ENCODE measurements at regions of chr10 and their contacts with region 1.

Region 1: GRCh38 chr10:63157845-63158624 is 24.9 kb downstream of the NRBF2 start:
- DNase-seq: peak; percentile 67 to 92 (median 72)
- ATAC-seq: peak; percentile 87
- H3K4me3 ChIP-seq: no peak overlapping the region
- H3K27ac ChIP-seq: no peak overlapping the region
- H3K4me1 ChIP-seq: no peaks in the 10 kb centered on the region
- H3K27me3 ChIP-seq: no peaks in the 10 kb centered on the region
- CTCF ChIP-seq: peak; percentile 79 to 93 (median 83)
- EP300 ChIP-seq: no peak
- POLR2A ChIP-seq: no peak
- RAD21 ChIP-seq: peak; percentile 98 to 99

Region 2: GRCh38 chr10:62554632-62555199 is 603.3 kb before region 1 on chr10:
- CTCF ChIA-PET with region 1: no interaction called
- POLR2A ChIA-PET with region 1: no interaction called
- in situ Hi-C with region 1: no loop called
- intact Hi-C with region 1: loop called (anchors 2 kb)
- DNase-seq: peak; percentile 32 to 38 (median 33)
- ATAC-seq: peak; percentile 82
- H3K4me3 ChIP-seq: no peak overlapping the region
- H3K27ac ChIP-seq: no peak overlapping the region
- H3K4me1 ChIP-seq: no peaks in the 10 kb centered on the region
- H3K27me3 ChIP-seq: no peaks in the 10 kb centered on the region
- CTCF ChIP-seq: peak; percentile 49 to 67 (median 59)
- EP300 ChIP-seq: no peak
- POLR2A ChIP-seq: no peak
- RAD21 ChIP-seq: peak; percentile 62 to 63

Region 3: DNA sequence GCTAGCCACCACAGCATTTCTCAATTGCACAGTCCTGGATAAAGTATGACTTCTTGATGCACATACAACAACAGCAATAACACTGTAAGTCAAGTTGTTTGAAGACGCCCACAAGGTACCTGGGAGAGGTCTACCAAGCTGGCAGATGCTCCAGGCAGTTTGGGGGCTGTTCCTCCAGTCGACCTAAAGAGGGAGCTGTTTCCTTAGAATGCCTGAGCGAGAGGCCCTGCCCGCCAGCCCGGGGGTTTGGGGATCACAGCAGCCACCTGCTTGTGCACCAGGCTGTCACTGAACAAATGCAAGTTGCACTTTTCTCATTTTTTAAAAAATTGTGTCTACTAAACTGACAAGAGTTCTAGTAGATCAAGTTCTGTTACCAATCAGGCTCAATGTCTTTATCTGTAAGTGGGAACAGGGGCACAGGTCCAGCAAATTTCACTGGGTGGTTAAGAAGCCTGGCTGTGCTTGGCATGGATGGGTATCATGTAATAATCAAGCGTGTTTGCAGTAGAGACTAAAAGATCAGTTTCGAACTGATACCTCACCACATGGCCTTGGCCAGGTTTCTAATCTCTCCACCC is 547.3 kb before region 1 on chr10:
- CTCF ChIA-PET with region 1: no interaction called
- POLR2A ChIA-PET with region 1: no interaction called
- in situ Hi-C with region 1: loop called (anchors 10 kb)
- intact Hi-C with region 1: loop called (anchors 5 kb)
- DNase-seq: peak; percentile 56 to 67 (median 59)
- ATAC-seq: peak; percentile 93
- H3K4me3 ChIP-seq: no peak overlapping the region
- H3K27ac ChIP-seq: no peak overlapping the region
- H3K4me1 ChIP-seq: no peaks in the 10 kb centered on the region
- H3K27me3 ChIP-seq: no peaks in the 10 kb centered on the region
- CTCF ChIP-seq: peak; percentile 71 to 82 (median 80)
- EP300 ChIP-seq: no peak
- POLR2A ChIP-seq: no peak
- RAD21 ChIP-seq: peak; percentile 65 to 75

Region 4: DNA sequence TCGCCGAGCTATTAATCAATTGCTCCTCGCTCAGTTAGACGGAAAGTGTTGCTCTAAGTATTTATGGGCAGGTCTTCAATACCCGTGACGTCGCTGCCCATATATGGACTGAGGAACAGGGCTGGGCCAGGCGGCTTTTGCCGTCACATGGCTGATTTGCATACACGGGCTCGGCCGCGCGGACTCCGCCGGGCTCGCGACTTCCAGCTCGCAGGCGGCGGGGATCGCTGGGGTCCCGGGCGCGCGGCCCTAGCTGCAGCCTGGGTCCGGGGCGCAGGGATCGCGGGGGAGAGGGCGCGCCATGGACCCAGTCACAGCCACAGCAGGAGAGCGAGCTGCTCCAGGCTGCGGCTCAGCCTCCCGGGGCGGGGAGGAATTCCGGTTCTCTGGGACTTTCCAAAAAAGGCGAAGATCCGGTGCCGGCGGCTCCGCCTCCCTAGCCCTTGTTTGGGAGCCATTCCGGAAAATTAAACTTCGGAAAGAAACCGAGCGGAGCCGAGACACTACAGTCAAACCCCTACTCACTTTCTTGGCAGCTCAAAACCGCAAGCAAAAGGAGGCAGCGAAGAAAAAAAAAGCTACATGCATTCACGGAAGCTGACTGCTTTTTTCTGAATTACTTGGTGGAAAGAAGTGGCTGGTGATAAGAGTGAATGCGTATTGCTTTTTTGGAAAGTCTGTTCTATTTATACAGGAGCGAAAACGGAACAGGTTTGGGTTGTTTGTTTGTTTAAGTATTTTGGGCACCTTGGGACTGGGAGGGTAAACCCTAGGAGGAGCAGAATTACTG is 341.5 kb before region 1 on chr10 and contains the start of gene EGR2:
- CTCF ChIA-PET with region 1: no interaction called
- POLR2A ChIA-PET with region 1: no interaction called
- in situ Hi-C with region 1: no loop called
- intact Hi-C with region 1: loop called (anchors 2 kb)
- DNase-seq: peak; percentile 80 to 94 (median 88)
- ATAC-seq: peak; percentile 92
- H3K4me3 ChIP-seq: peak within 1 kb of the TSS; percentile 74
- H3K27ac ChIP-seq: peak within 1 kb of the TSS; percentile 70
- H3K4me1 ChIP-seq: peaks cover 7 to 50% of the 10 kb centered on the region in 2 experiments; a peak in 3 of 5 replicates
- H3K27me3 ChIP-seq: peaks cover 19 to 53% of the 10 kb centered on the region in 2 experiments; a peak in 4 of 5 replicates
- CTCF ChIP-seq: no peak
- EP300 ChIP-seq: no peak
- POLR2A ChIP-seq: peak; percentile 64
- RAD21 ChIP-seq: no peak
- polyA plus RNA-seq, gene EGR2: not detected

Region 5: GRCh38 chr10:63083904-63084689 is 73.9 kb before region 1 on chr10:
- CTCF ChIA-PET with region 1: interaction called, 3 read pairs
- POLR2A ChIA-PET with region 1: no interaction called
- in situ Hi-C with region 1: no loop called
- intact Hi-C with region 1: loop called (anchors 5 kb)
- DNase-seq: peak; percentile 40 to 73 (median 42)
- ATAC-seq: peak; percentile 96
- H3K4me3 ChIP-seq: no peak overlapping the region
- H3K27ac ChIP-seq: no peak overlapping the region
- H3K4me1 ChIP-seq: no peaks in the 10 kb centered on the region
- H3K27me3 ChIP-seq: 0 out of 5 replicates have a peak, but pooled peaks cover 0 to 5% of the 10 kb centered on the region in 2 experiments
- CTCF ChIP-seq: peak; percentile 68 to 91 (median 76)
- EP300 ChIP-seq: no peak
- POLR2A ChIP-seq: no peak
- RAD21 ChIP-seq: peak; percentile 90

Region 6: DNA sequence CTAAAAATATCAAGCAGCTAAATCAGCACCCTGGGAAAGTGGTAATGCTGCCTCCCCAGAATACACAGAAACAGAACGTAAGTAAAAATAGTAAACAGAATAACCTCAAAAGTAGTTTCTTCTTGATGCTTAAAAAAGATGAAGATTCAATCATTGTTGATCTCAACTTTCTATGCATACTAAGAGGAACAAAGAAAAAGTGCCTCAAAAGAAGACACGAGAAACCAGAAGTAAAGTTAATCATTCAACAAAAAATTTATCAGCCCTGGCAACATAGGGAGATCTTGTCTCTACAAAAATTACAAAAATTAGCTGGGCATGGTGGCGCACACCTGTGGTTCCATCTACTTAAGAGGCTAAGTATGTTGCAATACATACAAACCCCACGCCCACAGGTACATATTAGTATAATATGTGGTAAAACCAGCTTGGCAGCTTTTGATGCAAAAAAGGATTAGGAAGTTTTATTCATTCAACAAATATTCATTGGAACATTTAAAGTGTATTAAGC is 128.8 kb after region 1 on chr10:
- CTCF ChIA-PET with region 1: no interaction called
- POLR2A ChIA-PET with region 1: no interaction called
- in situ Hi-C with region 1: no loop called
- intact Hi-C with region 1: no loop called
- DNase-seq: no peak
- ATAC-seq: no peak
- H3K4me3 ChIP-seq: no peak overlapping the region
- H3K27ac ChIP-seq: no peak overlapping the region
- H3K4me1 ChIP-seq: peaks cover 0 to 6% of the 10 kb centered on the region in 2 experiments; a peak in 2 of 5 replicates
- H3K27me3 ChIP-seq: no peaks in the 10 kb centered on the region
- CTCF ChIP-seq: no peak
- EP300 ChIP-seq: no peak
- POLR2A ChIP-seq: no peak
- RAD21 ChIP-seq: no peak

Region 7: DNA sequence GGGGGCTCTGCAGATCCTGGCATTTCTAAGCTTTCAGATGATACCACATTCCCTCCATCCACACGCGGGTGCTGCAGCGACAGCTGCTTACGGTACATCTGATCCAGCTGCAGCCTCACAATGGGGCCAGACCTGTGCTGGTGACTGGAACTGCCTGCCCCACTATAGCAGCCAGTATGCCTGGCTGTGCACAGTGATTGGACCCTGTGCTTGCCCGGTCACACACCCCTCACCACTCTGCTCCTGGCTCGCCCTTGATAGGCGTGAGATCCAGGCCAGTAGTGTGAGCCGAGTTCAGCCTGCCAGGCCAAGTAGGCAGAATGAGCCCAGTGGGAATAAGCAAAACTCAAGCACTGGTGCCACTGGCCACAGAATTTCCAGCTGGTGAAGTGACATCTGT is 139.9 kb after region 1 on chr10:
- CTCF ChIA-PET with region 1: no interaction called
- POLR2A ChIA-PET with region 1: no interaction called
- in situ Hi-C with region 1: no loop called
- intact Hi-C with region 1: no loop called
- DNase-seq: no peak
- ATAC-seq: no peak
- H3K4me3 ChIP-seq: no peak overlapping the region
- H3K27ac ChIP-seq: no peak overlapping the region
- H3K4me1 ChIP-seq: peaks cover 4 to 7% of the 10 kb centered on the region in 2 experiments; a peak in 4 of 5 replicates
- H3K27me3 ChIP-seq: no peaks in the 10 kb centered on the region
- CTCF ChIP-seq: no peak
- EP300 ChIP-seq: no peak
- POLR2A ChIP-seq: no peak
- RAD21 ChIP-seq: no peak

Measured in K562 (cell line).